A673 (cell line): ENCODE measurements at regions of chr2 and their contacts with region 1.

Region 1: GRCh38 chr2:101883863-101884262 is 107.9 kb upstream of the IL1R2 start:
- DNase-seq: peak; percentile 70
- H3K4me3 ChIP-seq: no peak overlapping the region
- H3K27ac ChIP-seq: no peak overlapping the region
- H3K4me1 ChIP-seq: peaks cover 29% of the 10 kb centered on the region
- H3K27me3 ChIP-seq: no peaks in the 10 kb centered on the region
- CTCF ChIP-seq: peak; percentile 79

Region 2: GRCh38 chr2:101387151-101387807 is 496.6 kb before region 1 on chr2 and contains the start of gene CREG2:
- CTCF ChIA-PET with region 1: no interaction called
- POLR2A ChIA-PET with region 1: no interaction called
- intact Hi-C with region 1: no loop called
- DNase-seq: peak; percentile 60
- H3K4me3 ChIP-seq: peak within 1 kb of the TSS; percentile 46
- H3K27ac ChIP-seq: no peak within 1 kb of the TSS
- H3K4me1 ChIP-seq: peaks cover 5% of the 10 kb centered on the region
- H3K27me3 ChIP-seq: peaks cover 59% of the 10 kb centered on the region
- CTCF ChIP-seq: peak; percentile 54
- total RNA-seq, gene CREG2: not detected in 2 replicates

Region 3: DNA sequence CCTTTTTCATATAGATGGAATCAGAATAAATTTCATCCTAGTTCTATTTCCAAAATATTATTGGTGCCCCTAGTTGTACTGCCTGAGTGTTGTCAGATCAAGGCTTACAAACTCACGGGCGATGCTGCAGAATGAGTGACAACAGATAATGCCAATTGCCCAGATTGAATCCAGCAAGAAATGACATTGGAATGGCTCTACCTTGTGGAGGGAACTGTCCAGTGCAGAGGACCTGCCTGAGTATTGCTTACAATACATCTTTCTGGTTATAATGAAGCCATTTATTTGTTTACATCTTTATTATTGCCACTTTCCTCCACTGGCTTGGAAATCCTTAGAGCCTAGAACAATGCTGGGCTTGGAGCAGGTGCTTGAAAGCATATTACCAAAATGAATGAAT is 100.1 kb after region 1 on chr2:
- CTCF ChIA-PET with region 1: no interaction called
- POLR2A ChIA-PET with region 1: no interaction called
- intact Hi-C with region 1: loop called (anchors 5 kb)
- DNase-seq: peak; percentile 22
- H3K4me3 ChIP-seq: no peak overlapping the region
- H3K27ac ChIP-seq: no peak overlapping the region
- H3K4me1 ChIP-seq: peaks cover 3% of the 10 kb centered on the region
- H3K27me3 ChIP-seq: no peaks in the 10 kb centered on the region
- CTCF ChIP-seq: peak; percentile 36; the same call in 1 of the 2 replicates

Region 4: GRCh38 chr2:102240640-102241370 is 356.9 kb after region 1 on chr2:
- CTCF ChIA-PET with region 1: interaction called, 5 read pairs
- POLR2A ChIA-PET with region 1: no interaction called
- intact Hi-C with region 1: loop called (anchors 5 kb)
- DNase-seq: peak; percentile 73
- H3K4me3 ChIP-seq: no peak overlapping the region
- H3K27ac ChIP-seq: no peak overlapping the region
- H3K4me1 ChIP-seq: peaks cover 4% of the 10 kb centered on the region
- H3K27me3 ChIP-seq: peaks cover 26% of the 10 kb centered on the region
- CTCF ChIP-seq: peak; percentile 97

Region 5: DNA sequence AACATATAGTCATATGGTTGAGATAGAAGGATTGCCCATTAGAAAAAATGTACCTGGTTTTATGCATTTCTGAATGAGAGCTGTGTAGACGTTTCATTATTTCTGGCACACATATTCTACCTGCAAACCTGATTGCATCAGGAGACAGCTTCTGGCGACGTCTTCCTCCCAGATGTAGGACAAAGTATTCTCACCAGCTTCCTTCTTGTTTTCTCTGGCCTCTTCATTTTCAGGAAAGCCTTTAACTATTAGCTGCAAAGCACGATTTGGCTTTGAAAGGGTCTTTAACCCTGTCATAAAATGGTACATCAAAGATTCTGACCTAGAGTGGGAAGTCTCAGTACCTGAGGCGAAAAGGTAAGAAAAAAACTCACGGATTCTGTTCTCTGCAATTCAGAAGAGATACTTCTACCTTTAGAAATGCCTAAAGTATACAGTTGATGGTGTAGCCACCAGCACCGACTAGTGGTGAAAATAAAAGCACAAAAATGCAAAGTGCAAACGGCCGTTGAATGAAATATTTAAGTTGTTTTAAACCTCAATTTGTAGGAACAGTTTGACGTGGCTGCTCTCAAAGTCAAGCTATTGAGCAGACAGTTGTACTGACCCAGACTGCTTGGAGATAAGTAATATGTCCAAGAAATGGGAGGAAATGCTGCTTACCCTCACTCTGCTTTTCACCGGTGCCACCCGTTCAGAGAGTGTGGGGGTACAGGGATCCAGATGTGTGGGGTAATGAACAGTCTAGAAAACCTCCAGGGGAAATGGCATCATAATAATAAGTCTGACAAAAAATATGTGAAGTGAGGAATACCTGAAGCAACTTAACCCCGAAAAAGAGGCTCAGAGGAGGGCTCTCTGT is 559.3 kb after region 1 on chr2:
- CTCF ChIA-PET with region 1: no interaction called
- POLR2A ChIA-PET with region 1: no interaction called
- intact Hi-C with region 1: loop called (anchors 10 kb)
- DNase-seq: peak; percentile 25
- H3K4me3 ChIP-seq: no peak overlapping the region
- H3K27ac ChIP-seq: no peak overlapping the region
- H3K4me1 ChIP-seq: no peaks in the 10 kb centered on the region
- H3K27me3 ChIP-seq: peaks cover 28% of the 10 kb centered on the region
- CTCF ChIP-seq: peak; percentile 71